ENCODE measurements at regions of chrX and their contacts with region 1.

Region 1: DNA sequence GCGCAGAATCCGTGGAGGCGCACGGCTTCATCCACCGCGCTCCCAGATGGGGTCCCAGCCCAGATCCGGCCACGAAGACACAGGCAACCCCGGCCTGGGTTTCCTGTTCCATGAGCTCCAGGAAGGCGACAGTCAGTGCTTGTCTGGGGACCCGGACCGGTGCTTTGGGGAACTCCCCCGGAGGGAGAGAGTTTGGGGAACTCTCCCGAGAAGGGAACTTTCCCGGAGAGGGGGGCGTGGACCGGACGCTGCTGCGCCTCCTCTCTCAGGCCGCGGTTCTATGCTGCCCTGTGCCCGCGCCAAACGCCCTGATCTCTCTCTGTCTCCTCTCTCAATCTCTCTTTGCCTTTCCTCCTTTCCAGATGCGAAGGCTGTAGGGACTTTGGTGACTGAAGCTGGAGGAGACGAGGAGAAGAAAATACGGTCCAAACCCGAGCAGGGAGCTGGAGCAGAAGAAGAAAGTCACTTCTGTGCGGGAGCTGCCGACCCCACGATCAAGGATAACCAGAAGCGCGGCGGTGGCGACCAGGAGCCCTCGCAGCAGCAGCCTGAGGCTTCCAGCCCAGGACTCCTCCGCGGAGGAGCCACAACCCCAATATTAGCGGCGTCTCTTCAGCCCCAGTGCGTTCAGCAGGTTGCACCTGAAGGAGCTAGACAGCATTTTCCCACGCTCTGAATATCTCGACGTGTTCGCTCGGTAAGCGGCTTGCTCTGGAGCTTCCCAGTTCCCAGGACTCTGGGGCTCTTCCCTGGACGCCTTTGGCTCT is 47.6 kb upstream of the NKAP start:
- DNase-seq: peak in 3 of 9 experiments; percentile 13 to 28 (median 17)
- ATAC-seq: no peak
- H3K4me3 ChIP-seq: peak overlapping the region; percentile 18 to 19
- H3K4me3 Mint-ChIP-seq: peak overlapping the region; percentile 62
- H3K27ac ChIP-seq: no peak overlapping the region
- H3K27ac Mint-ChIP-seq: no peak overlapping the region
- H3K4me1 ChIP-seq: peaks cover 9% of the 10 kb centered on the region
- H3K4me1 Mint-ChIP-seq: peaks cover 12% of the 10 kb centered on the region
- H3K27me3 ChIP-seq: peaks cover 20 to 42% of the 10 kb centered on the region in 2 experiments
- H3K27me3 Mint-ChIP-seq: peaks cover 58% of the 10 kb centered on the region
- CTCF ChIP-seq: no peak

Region 2: GRCh38 chrX:119954374-119954773 is 36.8 kb before region 1 on chrX:
- CTCF ChIA-PET with region 1: no interaction called
- POLR2A ChIA-PET with region 1: no interaction called
- intact Hi-C with region 1: loop called in 1 of 2 experiments (anchors 5 kb)
- DNase-seq: peak in 1 of 9 experiments; percentile 43
- ATAC-seq: no peak
- H3K4me3 ChIP-seq: no peak overlapping the region
- H3K4me3 Mint-ChIP-seq: no peak overlapping the region
- H3K27ac ChIP-seq: no peak overlapping the region
- H3K27ac Mint-ChIP-seq: peak overlapping the region; percentile 64
- H3K4me1 ChIP-seq: peaks cover 30% of the 10 kb centered on the region
- H3K4me1 Mint-ChIP-seq: peaks cover 37% of the 10 kb centered on the region
- H3K27me3 ChIP-seq: no peaks in the 10 kb centered on the region
- H3K27me3 Mint-ChIP-seq: no peaks in the 10 kb centered on the region
- CTCF ChIP-seq: no peak

Region 3: DNA sequence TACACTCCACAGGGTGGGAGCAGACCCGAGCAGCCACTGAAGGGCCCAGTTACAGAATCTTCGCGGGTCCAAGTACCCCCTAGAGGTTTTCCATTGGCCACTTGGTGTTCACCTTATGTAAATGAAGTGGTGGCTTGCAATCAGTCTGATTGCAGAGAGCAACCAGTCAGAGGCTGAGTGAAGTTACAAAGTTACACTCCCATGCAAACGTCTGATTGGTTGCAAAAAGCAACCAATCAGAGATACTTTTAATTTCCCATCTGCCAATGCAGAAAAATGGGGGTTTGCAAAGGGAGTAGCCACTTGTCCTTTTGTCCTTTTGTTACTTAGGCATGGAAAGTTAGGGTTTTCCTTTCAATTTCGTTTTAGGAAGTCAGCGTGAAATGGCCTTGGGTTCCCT is 20.6 kb before region 1 on chrX:
- CTCF ChIA-PET with region 1: no interaction called
- POLR2A ChIA-PET with region 1: no interaction called
- intact Hi-C with region 1: loop called in 1 of 2 experiments (anchors 2 kb)
- DNase-seq: no peak
- ATAC-seq: no peak
- H3K4me3 ChIP-seq: no peak overlapping the region
- H3K4me3 Mint-ChIP-seq: no peak overlapping the region
- H3K27ac ChIP-seq: no peak overlapping the region
- H3K27ac Mint-ChIP-seq: no peak overlapping the region
- H3K4me1 ChIP-seq: no peaks in the 10 kb centered on the region
- H3K4me1 Mint-ChIP-seq: no peaks in the 10 kb centered on the region
- H3K27me3 ChIP-seq: no peaks in the 10 kb centered on the region
- H3K27me3 Mint-ChIP-seq: no peaks in the 10 kb centered on the region
- CTCF ChIP-seq: no peak

Region 4: DNA sequence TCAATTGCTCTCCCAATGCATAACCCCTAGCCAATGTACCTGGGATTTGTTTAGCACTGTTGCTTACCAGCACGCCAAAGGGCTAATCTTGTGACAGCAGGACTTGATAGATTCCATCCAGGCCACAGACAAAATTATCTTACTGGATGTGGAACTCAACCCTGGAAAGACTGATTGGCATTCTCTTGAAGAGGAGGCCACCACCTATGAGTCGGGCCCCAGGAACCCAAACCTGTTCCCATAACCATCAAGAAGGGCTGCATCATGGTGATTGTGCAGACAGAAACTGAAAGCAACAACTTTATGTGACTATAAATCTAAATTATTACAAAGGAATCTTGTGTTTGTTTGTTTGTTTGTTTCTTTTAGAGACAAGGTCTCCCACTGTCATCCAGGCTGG is 339.9 kb after region 1 on chrX:
- CTCF ChIA-PET with region 1: no interaction called
- POLR2A ChIA-PET with region 1: no interaction called
- intact Hi-C with region 1: no loop called
- DNase-seq: no peak
- ATAC-seq: no peak
- H3K4me3 ChIP-seq: no peak overlapping the region
- H3K4me3 Mint-ChIP-seq: no peak overlapping the region
- H3K27ac ChIP-seq: no peak overlapping the region
- H3K27ac Mint-ChIP-seq: no peak overlapping the region
- H3K4me1 ChIP-seq: no peaks in the 10 kb centered on the region
- H3K4me1 Mint-ChIP-seq: no peaks in the 10 kb centered on the region
- H3K27me3 ChIP-seq: no peaks in the 10 kb centered on the region
- H3K27me3 Mint-ChIP-seq: no peaks in the 10 kb centered on the region
- CTCF ChIP-seq: no peak

Region 5: DNA sequence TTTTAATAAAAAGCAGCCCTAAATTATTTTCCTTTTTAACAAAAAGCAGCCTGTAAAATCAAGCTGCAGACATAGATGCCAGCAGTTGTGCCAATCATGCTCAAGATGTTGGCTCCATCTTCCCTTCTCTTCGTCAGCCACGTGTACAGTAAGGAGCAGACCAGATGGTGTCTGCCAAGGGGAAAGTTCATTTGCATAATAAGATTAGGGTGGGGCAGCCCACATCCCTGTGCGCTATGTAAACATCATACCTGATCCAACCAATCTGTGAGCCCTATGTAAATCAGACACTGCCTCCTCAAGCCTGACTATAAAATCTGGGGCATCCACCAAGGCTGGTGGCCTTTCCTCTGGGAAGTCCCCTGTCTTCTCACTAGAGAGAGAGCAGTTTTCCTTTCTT is 661.8 kb after region 1 on chrX:
- CTCF ChIA-PET with region 1: no interaction called
- POLR2A ChIA-PET with region 1: no interaction called
- intact Hi-C with region 1: no loop called
- DNase-seq: no peak
- ATAC-seq: no peak
- H3K4me3 ChIP-seq: no peak overlapping the region
- H3K4me3 Mint-ChIP-seq: no peak overlapping the region
- H3K27ac ChIP-seq: no peak overlapping the region
- H3K27ac Mint-ChIP-seq: no peak overlapping the region
- H3K4me1 ChIP-seq: no peaks in the 10 kb centered on the region
- H3K4me1 Mint-ChIP-seq: no peaks in the 10 kb centered on the region
- H3K27me3 ChIP-seq: no peaks in the 10 kb centered on the region
- H3K27me3 Mint-ChIP-seq: no peaks in the 10 kb centered on the region
- CTCF ChIP-seq: no peak

Measured in CD8-positive, alpha-beta T cell (primary cell).